Activated T-helper 1 cell treated with anti-CD3 and anti-CD28 coated beads, Interleukin-12 subunit alpha, Interleukin-12 subunit beta, Interleukin-2, Interleukin-4 antibody, amounts not matched to agents 30 ng/mL and 10 ng/mL and 1 ng/mL, durations not matched to agents 14 hours and 24 hours and 36 hours (primary cell): ENCODE measurements at regions of chr14 and their contacts with region 1.

Region 1: GRCh38 chr14:45253068-45253753 is at the start of gene MIS18BP1:
- DNase-seq: peak; percentile 93
- H3K4me3 Mint-ChIP-seq: peak within 1 kb of the TSS; percentile 94
- H3K27ac Mint-ChIP-seq: peak within 1 kb of the TSS; percentile 98
- H3K4me1 Mint-ChIP-seq: peaks cover 16% of the 10 kb centered on the region
- H3K27me3 Mint-ChIP-seq: peaks cover 3% of the 10 kb centered on the region
- total RNA-seq, gene MIS18BP1: 66.4 and 66.6 TPM in 2 replicates

Region 2: DNA sequence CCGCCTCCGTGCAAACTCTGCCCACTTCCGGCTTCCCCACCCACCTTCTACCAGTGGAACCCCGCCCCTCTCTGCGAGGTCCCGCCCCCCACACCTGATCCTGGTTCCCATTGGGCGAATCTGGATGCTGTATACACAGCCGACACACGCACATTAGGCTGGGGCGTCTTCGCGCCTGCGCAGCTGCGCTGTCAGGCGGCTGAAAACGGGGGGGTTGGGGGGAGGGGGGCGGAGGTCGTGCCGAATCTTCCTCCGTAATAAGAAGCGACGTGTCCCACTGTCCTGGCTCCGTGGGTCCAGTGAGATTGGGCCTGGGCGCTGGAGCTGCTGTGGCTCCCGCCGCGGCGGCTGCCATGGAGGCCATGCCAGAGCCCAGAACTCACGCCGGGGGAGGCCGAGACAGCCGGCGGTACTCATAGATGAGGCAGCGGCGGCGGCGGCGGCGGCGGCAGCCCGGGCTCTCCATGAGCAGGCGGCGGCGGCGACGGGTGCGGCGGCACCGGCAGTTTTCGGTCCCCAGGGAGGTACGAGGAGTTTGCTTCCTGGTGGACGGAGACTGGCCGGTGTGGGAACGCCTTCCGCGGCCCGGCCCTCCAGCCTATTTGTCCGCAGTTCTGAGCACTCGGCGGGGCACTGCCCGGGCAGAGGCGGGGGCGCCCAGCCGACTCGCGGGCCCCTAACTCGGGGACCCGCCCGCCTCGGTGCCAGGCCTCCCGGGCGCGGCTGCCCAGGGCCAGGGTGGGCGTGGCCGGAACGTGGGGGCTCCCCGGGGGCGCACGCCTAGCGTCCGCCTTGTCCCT is 356.0 kb before region 1 on chr14:
- intact Hi-C with region 1: loop called (anchors 1 kb)
- DNase-seq: peak; percentile 85
- H3K4me3 Mint-ChIP-seq: peak overlapping the region; percentile 93
- H3K27ac Mint-ChIP-seq: peak overlapping the region; percentile 72
- H3K4me1 Mint-ChIP-seq: peaks cover 24% of the 10 kb centered on the region
- H3K27me3 Mint-ChIP-seq: peaks cover 6% of the 10 kb centered on the region

Region 3: GRCh38 chr14:45083971-45084722 is 169.1 kb before region 1 on chr14 and contains the start of gene PRPF39:
- intact Hi-C with region 1: loop called (anchors 1 kb)
- DNase-seq: peak; percentile 95
- H3K4me3 Mint-ChIP-seq: peak within 1 kb of the TSS; percentile 97
- H3K27ac Mint-ChIP-seq: peak within 1 kb of the TSS; percentile 95
- H3K4me1 Mint-ChIP-seq: peaks cover 57% of the 10 kb centered on the region
- H3K27me3 Mint-ChIP-seq: no peaks in the 10 kb centered on the region
- total RNA-seq, gene PRPF39: 51.2 and 55.7 TPM in 2 replicates

Region 4: DNA sequence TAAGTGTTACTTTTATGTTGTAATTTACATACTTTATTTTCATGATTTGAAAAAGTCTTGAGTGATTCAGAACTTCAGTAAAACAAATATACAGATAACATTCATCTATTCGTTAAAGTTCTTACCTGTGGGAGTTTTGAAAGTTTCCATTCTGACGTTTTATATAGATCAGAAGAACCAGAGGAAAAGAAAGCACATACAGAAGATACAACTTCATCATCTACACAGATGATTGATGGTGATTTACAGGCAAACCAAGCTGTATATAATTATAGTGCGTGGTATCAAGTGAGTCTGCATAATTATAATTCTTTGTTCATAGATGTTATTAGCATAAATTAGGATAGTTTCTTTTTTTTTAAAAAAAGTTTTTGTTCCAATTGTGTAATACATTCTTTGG is 138.9 kb before region 1 on chr14:
- intact Hi-C with region 1: loop called (anchors 1 kb)
- DNase-seq: no peak
- H3K4me3 Mint-ChIP-seq: no peak overlapping the region
- H3K27ac Mint-ChIP-seq: peak overlapping the region; percentile 70
- H3K4me1 Mint-ChIP-seq: peaks cover 14% of the 10 kb centered on the region
- H3K27me3 Mint-ChIP-seq: no peaks in the 10 kb centered on the region

Region 5: DNA sequence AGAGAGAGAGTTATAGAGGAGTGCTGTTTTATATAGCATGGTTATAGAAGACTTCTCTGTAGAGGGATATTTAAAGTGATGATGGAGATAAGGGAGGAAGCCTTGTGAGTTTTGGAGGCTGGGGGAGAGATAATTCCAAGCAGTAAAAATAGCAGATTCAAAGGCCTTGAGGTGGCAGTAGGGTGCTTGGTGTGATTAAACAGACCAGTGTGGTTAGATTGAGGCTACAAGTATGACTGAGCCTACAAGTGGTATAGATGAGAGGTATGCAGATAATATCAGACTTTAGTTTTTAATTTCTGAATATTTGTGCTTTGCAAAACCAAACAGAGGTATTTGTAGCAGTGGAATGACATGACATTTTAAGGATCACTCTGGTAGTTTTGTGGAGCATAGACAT is 97.2 kb before region 1 on chr14:
- intact Hi-C with region 1: loop called (anchors 5 kb)
- DNase-seq: no peak
- H3K4me3 Mint-ChIP-seq: no peak overlapping the region
- H3K27ac Mint-ChIP-seq: no peak overlapping the region
- H3K4me1 Mint-ChIP-seq: peaks cover 8% of the 10 kb centered on the region
- H3K27me3 Mint-ChIP-seq: no peaks in the 10 kb centered on the region

Region 6: GRCh38 chr14:45267071-45267470 is 13.9 kb after region 1 on chr14:
- intact Hi-C with region 1: loop called (anchors 2 kb)
- DNase-seq: no peak
- H3K4me3 Mint-ChIP-seq: no peak overlapping the region
- H3K27ac Mint-ChIP-seq: no peak overlapping the region
- H3K4me1 Mint-ChIP-seq: peaks cover 5% of the 10 kb centered on the region
- H3K27me3 Mint-ChIP-seq: peaks cover 7% of the 10 kb centered on the region